ENCODE measurements at regions of chr9 and their contacts with region 1.

Region 1: GRCh38 chr9:121498150-121498486 is 1.5 kb downstream of the GGTA1 start:
- DNase-seq: peak in 1 of 2 donors; percentile 74
- ATAC-seq: peak; percentile 82
- H3K4me3 ChIP-seq: peak overlapping the region; percentile 70 to 79
- H3K27ac ChIP-seq: peak overlapping the region in 1 of 2 donors; percentile 58
- H3K4me1 ChIP-seq: no peaks in the 10 kb centered on the region
- H3K27me3 ChIP-seq: no peaks in the 10 kb centered on the region

Region 2: DNA sequence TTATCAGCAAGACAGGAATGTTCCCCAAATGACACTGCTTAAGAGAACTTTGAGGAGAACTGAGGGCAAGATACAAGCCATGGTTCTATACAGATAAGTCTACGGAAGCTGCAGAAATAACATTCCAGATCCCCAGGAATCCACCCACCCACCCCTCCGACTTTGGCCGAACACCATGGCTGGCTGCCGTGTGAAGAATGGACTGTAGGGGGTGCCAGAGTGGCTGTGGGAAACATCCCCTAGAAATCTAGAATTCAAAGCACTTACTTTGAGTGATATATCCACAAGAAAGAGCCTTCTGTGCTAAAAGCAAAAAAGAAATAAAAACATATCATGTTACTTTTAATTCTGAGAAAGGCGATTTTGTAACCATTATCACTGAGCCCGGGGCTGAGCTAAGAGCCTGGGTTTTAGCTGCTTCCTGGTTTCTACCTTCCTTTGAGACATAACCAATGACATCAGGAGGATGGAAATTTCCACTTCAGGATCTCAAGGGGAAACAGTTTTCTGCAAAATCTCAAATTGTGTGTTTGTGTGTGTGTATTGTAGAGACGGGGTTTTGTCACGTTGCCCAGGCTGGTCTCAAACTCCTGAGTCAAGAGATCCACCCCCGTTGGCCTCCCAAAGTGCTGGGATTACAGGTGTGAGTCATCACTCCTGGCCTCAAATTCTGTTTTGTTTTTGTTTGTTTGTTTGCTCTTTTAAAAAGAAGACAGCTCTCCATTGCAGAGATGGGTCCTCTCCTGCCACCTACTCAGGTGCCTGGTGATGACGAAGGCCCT is 34.9 kb before region 1 on chr9:
- intact Hi-C with region 1: loop called (anchors 2 kb)
- DNase-seq: peak; percentile 77 to 89
- ATAC-seq: peak; percentile 75
- H3K4me3 ChIP-seq: no peak overlapping the region
- H3K27ac ChIP-seq: peak overlapping the region in 1 of 2 donors; percentile 34
- H3K4me1 ChIP-seq: no peaks in the 10 kb centered on the region
- H3K27me3 ChIP-seq: no peaks in the 10 kb centered on the region